ENCODE measurements at regions of chr1 and their contacts with region 1.

Region 1: GRCh38 chr1:116498789-116499628 is 71.8 kb downstream of the CD58 start:
- DNase-seq: no peak
- H3K4me3 ChIP-seq: no peak overlapping the region
- H3K27ac ChIP-seq: no peak overlapping the region
- H3K4me1 ChIP-seq: peaks cover 0 to 6% (median 3%) of the 10 kb centered on the region in 4 donors
- H3K27me3 ChIP-seq: no peaks in the 10 kb centered on the region
- CTCF ChIP-seq: peak; percentile 11 to 87 (median 68)
- EP300 ChIP-seq: no peak
- POLR2A ChIP-seq: no peak

Region 2: DNA sequence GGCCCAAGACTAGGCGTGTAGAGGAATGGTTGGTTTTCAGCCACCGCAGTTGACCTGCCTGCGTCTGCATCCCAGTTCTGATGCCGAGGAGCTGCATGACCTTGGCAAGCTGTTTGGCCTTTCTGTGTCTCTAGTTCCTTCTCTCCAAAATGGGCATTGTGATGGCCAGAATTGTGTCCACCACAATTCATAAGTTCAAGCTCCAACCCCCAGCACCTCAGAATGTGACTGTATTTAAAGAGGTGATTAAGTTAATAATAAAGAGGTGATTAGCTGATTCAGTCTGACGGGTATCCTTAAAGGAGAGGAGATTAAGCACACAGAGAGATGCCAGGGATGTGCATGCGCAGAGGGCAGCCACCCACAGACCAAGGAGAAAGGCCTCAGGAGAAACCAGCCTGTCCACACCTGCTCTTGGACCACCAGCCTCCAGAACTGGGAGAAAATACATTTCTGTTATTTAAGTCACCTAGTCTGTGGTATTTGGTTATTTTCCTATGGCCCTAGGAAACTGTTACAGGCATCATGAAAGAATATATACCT is 359.3 kb before region 1 on chr1:
- intact Hi-C with region 1: loop called (anchors 5 kb)
- DNase-seq: no peak
- H3K4me3 ChIP-seq: no peak overlapping the region
- H3K27ac ChIP-seq: no peak overlapping the region
- H3K4me1 ChIP-seq: peaks cover 0 to 7% (median 0%) of the 10 kb centered on the region in 4 donors
- H3K27me3 ChIP-seq: no peaks in the 10 kb centered on the region
- CTCF ChIP-seq: no peak
- EP300 ChIP-seq: no peak
- POLR2A ChIP-seq: no peak

Region 3: GRCh38 chr1:116415699-116416533 is 83.1 kb before region 1 on chr1:
- intact Hi-C with region 1: no loop called
- DNase-seq: no peak
- H3K4me3 ChIP-seq: no peak overlapping the region
- H3K27ac ChIP-seq: no peak overlapping the region
- H3K4me1 ChIP-seq: peaks cover 0 to 17% (median 12%) of the 10 kb centered on the region in 4 donors
- H3K27me3 ChIP-seq: no peaks in the 10 kb centered on the region
- CTCF ChIP-seq: no peak
- EP300 ChIP-seq: no peak
- POLR2A ChIP-seq: no peak

Measured in sigmoid colon (tissue), 7 donors.